Posterior cingulate gyrus (tissue), 11 donors: ENCODE measurements at regions of chr2 and their contacts with region 1.

Region 1: GRCh38 chr2:96470636-96471035 is 34.5 kb downstream of the NEURL3 start:
- DNase-seq: peak in 8 of 10 donors; percentile 33 to 92 (median 56)

Region 2: DNA sequence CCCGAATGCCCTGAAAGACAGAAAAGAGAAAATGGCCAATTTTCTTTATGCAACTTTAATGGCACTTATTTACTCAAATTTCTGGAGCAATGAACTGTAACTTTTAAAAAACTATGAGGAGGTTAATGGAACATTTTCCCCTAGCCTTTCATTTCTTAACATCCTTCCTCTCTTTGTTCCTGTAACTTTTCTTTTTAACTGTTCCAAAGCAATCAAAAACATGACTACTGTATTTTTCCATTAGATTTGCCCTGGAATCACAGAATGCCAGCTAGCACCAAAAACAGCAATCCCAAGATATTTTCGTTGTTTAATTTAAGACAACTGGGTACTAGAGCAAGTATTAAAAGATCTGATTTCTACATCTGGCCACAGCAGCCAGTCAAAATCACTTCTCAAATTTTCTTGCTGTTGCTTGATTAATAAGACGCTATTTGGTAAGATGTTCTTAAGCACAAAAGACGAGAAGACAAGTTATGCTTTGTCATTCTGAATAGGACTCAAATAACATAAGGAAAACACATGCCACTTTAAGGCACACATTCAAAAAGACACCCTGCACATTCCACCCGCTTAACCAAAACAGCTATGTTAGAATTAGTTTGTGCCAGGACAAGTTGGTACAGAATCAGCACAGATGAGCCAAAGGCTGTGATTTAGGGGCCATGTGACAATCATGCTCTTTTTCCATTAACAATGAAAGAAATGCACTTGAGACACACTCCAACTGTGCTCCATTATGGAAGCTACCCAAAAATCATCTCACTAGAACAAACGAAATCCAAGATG is 265.6 kb before region 1 on chr2:
- intact Hi-C with region 1: no loop called
- DNase-seq: peak in 1 of 10 donors; percentile 22

Region 3: DNA sequence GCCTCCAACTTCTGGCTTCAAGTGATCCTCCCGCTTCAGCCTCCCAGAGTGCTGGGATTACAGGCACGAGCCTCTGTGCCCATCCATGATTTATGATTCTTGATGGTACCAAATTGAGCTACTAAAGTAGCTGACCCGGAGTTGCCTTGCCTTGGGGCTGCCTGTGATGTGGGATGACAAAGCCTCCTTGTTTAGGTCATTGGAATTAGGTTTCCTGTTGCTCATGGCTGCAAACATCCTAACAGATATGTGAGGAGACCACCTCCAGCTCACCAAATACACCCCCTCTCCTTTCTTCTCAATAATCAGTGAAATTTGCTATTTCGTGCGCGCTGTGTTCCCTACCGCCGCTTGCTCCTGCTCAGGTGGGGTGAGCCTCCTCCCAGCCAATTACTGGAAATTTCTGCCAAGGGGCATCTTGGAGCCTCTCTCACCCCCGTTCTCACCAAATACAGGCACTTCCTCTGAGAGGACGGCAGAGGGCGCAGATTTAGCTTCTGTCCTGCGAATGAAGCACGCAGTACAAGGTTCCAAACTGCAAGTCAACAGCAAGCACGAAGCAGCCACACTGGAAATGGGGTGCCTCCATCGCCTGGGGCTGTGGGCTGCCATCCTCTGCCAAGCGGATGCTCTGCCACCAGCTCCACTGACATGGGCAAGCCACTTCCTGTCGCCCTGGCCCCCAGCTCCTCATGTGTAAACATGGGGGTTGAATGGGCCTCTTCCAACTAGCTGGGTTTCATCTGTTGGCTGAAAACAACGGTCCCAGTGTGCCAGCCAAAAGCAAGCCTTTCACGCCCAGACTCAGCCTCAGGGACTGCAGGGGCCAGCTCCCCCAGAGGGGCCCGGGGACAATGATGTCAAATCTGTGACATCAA is 63.4 kb before region 1 on chr2:
- intact Hi-C with region 1: loop called (anchors 5 kb)
- DNase-seq: peak; percentile 57 to 96 (median 70)

Region 4: DNA sequence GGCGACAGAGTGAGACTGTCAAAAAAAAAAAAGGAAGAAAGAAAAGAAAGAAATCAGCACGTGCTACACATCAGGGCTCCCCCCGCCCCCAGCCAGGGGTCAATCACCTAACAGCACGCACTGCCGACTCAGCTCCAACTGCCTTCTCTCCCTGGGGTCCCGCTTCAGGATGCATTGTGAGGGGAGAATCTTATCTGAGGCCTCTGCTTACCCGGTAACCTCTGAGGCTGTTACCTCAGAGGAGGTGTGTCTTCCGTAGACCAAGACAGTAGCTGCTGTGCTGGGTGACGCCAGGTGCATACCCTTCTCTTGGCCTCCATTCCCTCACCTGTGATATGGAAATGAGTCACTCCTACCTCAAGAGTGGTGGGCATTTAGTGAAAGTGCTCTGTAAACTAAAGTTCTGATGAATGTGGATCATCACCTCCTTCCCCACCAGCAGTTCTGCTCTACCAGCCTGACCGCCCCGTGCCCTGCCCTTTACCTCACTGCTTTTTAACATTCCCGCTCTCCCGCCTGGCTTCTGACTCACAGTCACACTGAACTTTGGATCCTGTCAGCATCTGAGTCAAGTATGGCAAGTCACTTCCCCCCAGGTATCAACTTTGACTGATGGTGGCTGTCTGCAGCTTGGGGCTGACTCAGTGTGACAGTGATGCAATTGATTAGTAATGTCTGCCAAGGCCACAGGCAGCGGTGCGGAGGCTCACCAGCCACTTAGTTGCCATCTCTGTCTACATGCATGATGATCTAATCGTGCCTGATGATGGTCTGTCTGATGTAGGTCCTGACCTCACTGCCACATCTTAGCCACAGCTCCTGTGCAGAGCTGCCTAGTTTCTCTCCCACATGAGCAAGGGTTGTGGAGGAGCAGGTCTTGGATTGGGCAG is 86.0 kb after region 1 on chr2:
- intact Hi-C with region 1: no loop called
- DNase-seq: peak in 2 of 10 donors; percentile 22 to 55